ENCODE measurements at regions of chr14 and their contacts with region 1.

Region 1: GRCh38 chr14:23478111-23478759 is 8.7 kb downstream of the NGDN start:
- DNase-seq: peak; percentile 81
- ATAC-seq: peak; percentile 76
- H3K4me3 Mint-ChIP-seq: no peak overlapping the region
- H3K27ac Mint-ChIP-seq: no peak overlapping the region
- H3K4me1 Mint-ChIP-seq: peaks cover 4% of the 10 kb centered on the region
- H3K27me3 Mint-ChIP-seq: no peaks in the 10 kb centered on the region
- CTCF ChIP-seq: peak; percentile 71

Region 2: DNA sequence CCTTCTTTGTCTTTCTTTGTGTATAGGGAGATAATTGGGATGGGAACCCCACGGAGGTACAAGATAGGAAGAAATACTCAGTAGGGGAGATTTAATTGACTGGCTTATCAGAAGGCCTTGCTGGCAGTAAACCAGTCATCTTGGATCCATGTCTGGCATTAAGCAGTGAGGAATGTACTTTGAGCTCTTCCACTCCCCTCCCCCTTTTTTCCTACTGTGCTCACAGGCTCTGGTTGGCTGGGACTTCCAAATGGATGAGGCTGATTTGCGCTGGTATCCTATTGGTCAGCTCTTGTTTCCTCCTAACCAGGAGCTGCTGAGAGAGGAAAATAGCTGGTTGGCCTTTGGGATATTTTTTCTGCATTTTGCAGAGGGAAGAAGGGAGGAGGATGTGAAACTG is 16.0 kb after region 1 on chr14:
- CTCF ChIA-PET with region 1: interaction called, 10 read pairs
- POLR2A ChIA-PET with region 1: no interaction called
- intact Hi-C with region 1: no loop called
- DNase-seq: no peak
- ATAC-seq: no peak
- H3K4me3 Mint-ChIP-seq: no peak overlapping the region
- H3K27ac Mint-ChIP-seq: no peak overlapping the region
- H3K4me1 Mint-ChIP-seq: no peaks in the 10 kb centered on the region
- H3K27me3 Mint-ChIP-seq: no peaks in the 10 kb centered on the region
- CTCF ChIP-seq: no peak

Region 3: GRCh38 chr14:23555882-23556699 is 77.9 kb after region 1 on chr14 and contains the start of gene THTPA:
- CTCF ChIA-PET with region 1: interaction called, 291 read pairs
- POLR2A ChIA-PET with region 1: interaction called, 10 read pairs
- intact Hi-C with region 1: loop called (anchors 2 kb)
- DNase-seq: peak; percentile 98
- ATAC-seq: peak; percentile 80
- H3K4me3 Mint-ChIP-seq: peak within 1 kb of the TSS; percentile 94
- H3K27ac Mint-ChIP-seq: peak within 1 kb of the TSS; percentile 96
- H3K4me1 Mint-ChIP-seq: peaks cover 38% of the 10 kb centered on the region
- H3K27me3 Mint-ChIP-seq: no peaks in the 10 kb centered on the region
- CTCF ChIP-seq: no peak
- total RNA-seq, gene THTPA: 5.1 to 7.6 TPM

Measured in activated CD8-positive, alpha-beta T cell treated with anti-CD3 and anti-CD28 coated beads for 36 hours (primary cell).